ENCODE measurements at regions of chrX and their contacts with region 1.

Region 1: GRCh38 chrX:120549483-120550452 is 11.0 kb downstream of the CUL4B start:
- DNase-seq: peak in 1 of 3 donors; percentile 31
- ATAC-seq: peak in 1 of 2 donors; percentile 74
- H3K4me3 ChIP-seq: no peak overlapping the region
- H3K27ac ChIP-seq: no peak overlapping the region
- H3K4me1 ChIP-seq: no peaks in the 10 kb centered on the region
- H3K27me3 ChIP-seq: no peaks in the 10 kb centered on the region

Region 2: GRCh38 chrX:120603707-120604360 is 54.1 kb after region 1 on chrX and contains the start of gene MCTS1:
- intact Hi-C with region 1: loop called in 1 of 4 experiments (anchors 10 kb)
- DNase-seq: peak; percentile 84 to 91 (median 89)
- ATAC-seq: peak; percentile 98
- H3K4me3 ChIP-seq: peak within 1 kb of the TSS; percentile 98
- H3K27ac ChIP-seq: peak within 1 kb of the TSS; percentile 96
- H3K4me1 ChIP-seq: no peaks in the 10 kb centered on the region
- H3K27me3 ChIP-seq: no peaks in the 10 kb centered on the region
- total RNA-seq, gene MCTS1: 27.4 to 34.0 (median 28.8) TPM

Region 3: DNA sequence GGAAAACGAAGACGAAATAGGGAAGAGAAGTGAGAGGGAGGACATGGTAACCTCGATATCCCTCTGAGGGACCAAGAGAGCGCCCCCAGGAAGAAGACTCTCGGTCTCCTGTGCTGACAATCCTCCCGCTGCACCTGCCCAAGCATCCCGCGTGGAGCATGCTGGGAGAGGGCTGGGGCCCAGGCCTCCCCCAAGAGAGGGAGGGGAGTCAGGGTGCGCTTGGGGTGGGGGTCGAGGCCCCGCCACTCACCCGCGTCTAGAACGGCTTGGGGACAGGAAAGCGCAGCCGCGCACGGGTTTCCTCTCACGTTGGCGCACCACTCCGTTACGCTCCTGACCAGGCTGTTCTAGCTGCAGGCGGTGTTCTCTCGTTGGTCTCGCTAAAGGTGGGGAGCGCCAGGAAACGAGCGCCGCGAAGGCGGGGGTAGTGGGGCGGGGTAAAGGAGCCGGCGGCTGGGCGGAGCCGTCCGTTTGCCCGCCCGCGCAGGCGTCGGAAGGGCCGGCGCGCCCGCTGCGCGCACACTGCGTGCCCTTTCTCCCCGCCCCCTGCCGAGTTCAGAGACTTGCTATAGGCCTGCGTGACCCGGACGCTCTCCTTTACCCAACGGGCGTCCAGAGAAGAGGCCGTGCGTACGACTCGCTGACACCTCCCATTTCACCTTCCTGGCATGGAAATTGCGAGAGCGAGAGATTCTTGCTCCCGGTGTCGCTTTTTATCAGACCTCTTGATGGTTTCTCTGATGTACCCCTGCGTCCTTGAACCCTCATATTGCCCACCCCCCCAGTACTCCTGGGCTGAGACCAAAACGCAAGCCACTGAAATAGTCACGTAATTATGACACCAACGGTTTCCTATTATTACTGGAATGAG is 80.1 kb after region 1 on chrX and contains the start of gene C1GALT1C1:
- intact Hi-C with region 1: no loop called
- DNase-seq: peak; percentile 92 to 97 (median 97)
- ATAC-seq: peak; percentile 100
- H3K4me3 ChIP-seq: peak within 1 kb of the TSS; percentile 76
- H3K27ac ChIP-seq: peak within 1 kb of the TSS; percentile 98
- H3K4me1 ChIP-seq: no peaks in the 10 kb centered on the region
- H3K27me3 ChIP-seq: no peaks in the 10 kb centered on the region
- total RNA-seq, gene C1GALT1C1: 21.0 to 26.1 (median 22.4) TPM